ENCODE measurements at regions of chr1 and their contacts with region 1.

Region 1: GRCh38 chr1:212814537-212815334 is 23.0 kb downstream of the TATDN3 start:
- DNase-seq: no peak
- ATAC-seq: peak; percentile 82
- H3K4me3 Mint-ChIP-seq: no peak overlapping the region
- H3K27ac Mint-ChIP-seq: peak overlapping the region; percentile 69
- H3K4me1 Mint-ChIP-seq: peaks cover 14% of the 10 kb centered on the region
- H3K27me3 Mint-ChIP-seq: no peaks in the 10 kb centered on the region
- CTCF ChIP-seq: no peak

Region 2: DNA sequence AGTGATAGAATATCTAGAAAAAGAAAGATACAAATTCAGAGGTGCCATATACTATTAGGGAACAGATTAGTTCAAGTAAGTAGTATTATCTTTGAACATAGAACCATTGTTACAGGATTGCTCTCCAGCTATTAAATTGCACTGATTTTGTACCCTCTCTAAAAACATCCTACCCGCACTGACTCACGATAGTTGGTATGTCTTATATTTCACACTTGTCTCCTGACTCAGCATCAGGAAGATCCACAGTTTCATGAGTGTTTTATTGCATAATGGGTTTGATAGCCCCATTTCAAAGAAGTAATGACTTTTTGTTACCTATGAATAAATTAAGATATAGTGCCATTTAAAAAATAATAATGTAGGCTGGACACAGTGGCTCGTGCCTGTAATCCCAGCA is 17.1 kb before region 1 on chr1:
- CTCF ChIA-PET with region 1: interaction called, 13 read pairs
- POLR2A ChIA-PET with region 1: interaction called, 3 read pairs
- DNase-seq: no peak
- ATAC-seq: no peak
- H3K4me3 Mint-ChIP-seq: no peak overlapping the region
- H3K27ac Mint-ChIP-seq: no peak overlapping the region
- H3K4me1 Mint-ChIP-seq: peaks cover 24% of the 10 kb centered on the region
- H3K27me3 Mint-ChIP-seq: no peaks in the 10 kb centered on the region
- CTCF ChIP-seq: no peak

Region 3: GRCh38 chr1:212827824-212828278 is 13.1 kb after region 1 on chr1:
- CTCF ChIA-PET with region 1: interaction called, 10 read pairs
- POLR2A ChIA-PET with region 1: no interaction called
- DNase-seq: no peak
- ATAC-seq: no peak
- H3K4me3 Mint-ChIP-seq: no peak overlapping the region
- H3K27ac Mint-ChIP-seq: no peak overlapping the region
- H3K4me1 Mint-ChIP-seq: 0 out of 2 replicates have a peak, but pooled peaks cover 2% of the 10 kb centered on the region
- H3K27me3 Mint-ChIP-seq: peaks cover 10% of the 10 kb centered on the region
- CTCF ChIP-seq: no peak

Region 4: GRCh38 chr1:212857992-212858460 is 43.3 kb after region 1 on chr1 and contains the start of gene FLVCR1:
- CTCF ChIA-PET with region 1: interaction called, 18 read pairs
- POLR2A ChIA-PET with region 1: interaction called, 22 read pairs
- DNase-seq: peak; percentile 98
- ATAC-seq: peak; percentile 94
- H3K4me3 Mint-ChIP-seq: no peak within 1 kb of the TSS
- H3K27ac Mint-ChIP-seq: peak within 1 kb of the TSS; percentile 96
- H3K4me1 Mint-ChIP-seq: peaks cover 34% of the 10 kb centered on the region
- H3K27me3 Mint-ChIP-seq: peaks cover 10% of the 10 kb centered on the region
- CTCF ChIP-seq: no peak
- total RNA-seq, gene FLVCR1: 67.9 to 78.6 TPM (median 69.4 TPM) in 3 replicates

Region 5: DNA sequence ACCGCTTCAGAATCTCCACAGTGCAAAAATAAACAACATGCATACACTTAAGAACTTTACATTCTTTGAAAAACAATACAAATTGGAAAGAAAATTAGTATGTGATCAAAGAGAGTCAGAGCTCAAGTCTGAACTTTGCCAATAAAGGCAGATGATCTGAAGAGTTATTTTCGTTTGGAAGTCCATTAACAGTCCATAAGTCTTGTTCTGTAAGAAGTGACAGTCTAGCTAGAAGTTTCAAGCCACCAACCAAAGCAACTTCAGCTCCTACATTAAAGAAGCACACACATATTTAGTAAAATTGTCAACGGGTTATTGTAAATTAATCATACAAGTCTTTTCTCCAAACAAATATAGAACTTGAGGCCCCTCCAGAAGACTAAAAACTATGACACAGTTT is 180.2 kb after region 1 on chr1:
- CTCF ChIA-PET with region 1: interaction called, 15 read pairs
- POLR2A ChIA-PET with region 1: no interaction called
- DNase-seq: no peak
- ATAC-seq: no peak
- H3K4me3 Mint-ChIP-seq: no peak overlapping the region
- H3K27ac Mint-ChIP-seq: peak overlapping the region; percentile 60; the same call in 1 of the 2 replicates
- H3K4me1 Mint-ChIP-seq: peaks cover 14% of the 10 kb centered on the region
- H3K27me3 Mint-ChIP-seq: no peaks in the 10 kb centered on the region
- CTCF ChIP-seq: no peak

Region 6: GRCh38 chr1:213051127-213051880 is 236.6 kb after region 1 on chr1 and contains the start of gene RPS6KC1:
- CTCF ChIA-PET with region 1: no interaction called
- POLR2A ChIA-PET with region 1: no interaction called
- DNase-seq: peak; percentile 83
- ATAC-seq: peak; percentile 96
- H3K4me3 Mint-ChIP-seq: peak within 1 kb of the TSS; percentile 97
- H3K27ac Mint-ChIP-seq: peak within 1 kb of the TSS; percentile 81
- H3K4me1 Mint-ChIP-seq: peaks cover 33% of the 10 kb centered on the region
- H3K27me3 Mint-ChIP-seq: no peaks in the 10 kb centered on the region
- CTCF ChIP-seq: no peak
- total RNA-seq, gene RPS6KC1: 15.2 to 17.4 TPM (median 15.8 TPM) in 3 replicates